ENCODE measurements at regions of chrX and their contacts with region 1.

Region 1: GRCh38 chrX:10636337-10636736 is 16.0 kb upstream of the MID1 start:
- DNase-seq: peak in 1 of 2 experiments; percentile 51
- H3K4me3 ChIP-seq: no peak overlapping the region
- H3K4me3 Mint-ChIP-seq: no peak overlapping the region
- H3K27ac Mint-ChIP-seq: no peak overlapping the region
- H3K4me1 ChIP-seq: peaks cover 8% of the 10 kb centered on the region
- H3K4me1 Mint-ChIP-seq: no peaks in the 10 kb centered on the region
- H3K27me3 ChIP-seq: no peaks in the 10 kb centered on the region
- H3K27me3 Mint-ChIP-seq: no peaks in the 10 kb centered on the region
- CTCF ChIP-seq: peak; percentile 39 to 59

Region 2: DNA sequence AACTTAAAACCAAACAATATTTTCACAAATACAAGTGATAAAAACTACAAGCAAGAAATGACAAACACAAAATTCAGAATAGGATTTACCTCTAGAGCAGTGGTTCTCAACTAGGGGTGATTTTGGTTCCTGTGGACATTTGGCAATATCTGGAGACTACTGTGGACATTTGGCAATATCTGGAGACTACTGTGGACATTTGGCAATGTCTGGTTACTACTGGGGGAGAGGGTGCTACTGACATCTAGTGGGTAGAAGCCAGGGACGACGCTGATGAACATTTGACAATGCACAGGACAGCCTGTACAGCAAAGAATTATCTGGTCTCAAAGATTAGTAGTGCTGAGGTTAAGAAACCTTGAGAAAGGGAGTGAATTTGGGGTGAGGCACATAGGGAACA is 309.8 kb before region 1 on chrX:
- CTCF ChIA-PET with region 1: no interaction called
- POLR2A ChIA-PET with region 1: no interaction called
- intact Hi-C with region 1: loop called (anchors 1 kb)
- DNase-seq: peak; percentile 50 to 54
- H3K4me3 ChIP-seq: no peak overlapping the region
- H3K4me3 Mint-ChIP-seq: no peak overlapping the region
- H3K27ac Mint-ChIP-seq: no peak overlapping the region
- H3K4me1 ChIP-seq: peaks cover 17% of the 10 kb centered on the region
- H3K4me1 Mint-ChIP-seq: no peaks in the 10 kb centered on the region
- H3K27me3 ChIP-seq: no peaks in the 10 kb centered on the region
- H3K27me3 Mint-ChIP-seq: no peaks in the 10 kb centered on the region
- CTCF ChIP-seq: peak; percentile 26 to 48

Region 3: DNA sequence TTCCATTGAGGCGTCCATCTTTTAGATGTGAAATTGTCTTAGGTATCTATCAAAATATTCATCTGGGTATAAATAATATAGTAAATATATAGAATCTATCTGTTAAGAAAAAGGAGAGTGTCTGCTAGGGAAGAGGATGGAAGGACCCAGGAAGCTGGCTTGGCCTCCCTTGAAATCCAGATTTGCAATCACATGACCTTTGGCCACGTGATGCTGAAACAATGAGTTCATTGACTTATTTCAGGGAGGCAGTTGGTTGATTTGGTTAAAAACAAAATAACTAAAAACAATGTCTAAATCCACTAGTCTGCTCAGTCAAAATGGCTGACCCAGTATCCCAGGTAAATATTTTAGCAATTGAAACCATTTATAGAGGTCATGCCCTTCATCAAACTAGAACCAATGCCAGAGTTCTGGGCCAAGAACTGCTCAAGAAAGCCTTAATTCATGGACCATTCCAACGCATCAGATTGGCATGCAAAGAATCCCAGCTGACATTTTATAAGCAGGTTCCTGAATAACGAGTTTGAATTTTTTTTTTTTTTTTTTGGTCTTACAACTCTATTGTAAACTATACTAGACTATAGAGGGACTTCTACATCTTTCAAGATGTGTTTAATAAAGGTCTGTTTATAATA is 188.6 kb before region 1 on chrX:
- CTCF ChIA-PET with region 1: no interaction called
- POLR2A ChIA-PET with region 1: no interaction called
- intact Hi-C with region 1: loop called (anchors 2 kb)
- DNase-seq: no peak
- H3K4me3 ChIP-seq: no peak overlapping the region
- H3K4me3 Mint-ChIP-seq: no peak overlapping the region
- H3K27ac Mint-ChIP-seq: no peak overlapping the region
- H3K4me1 ChIP-seq: no peaks in the 10 kb centered on the region
- H3K4me1 Mint-ChIP-seq: no peaks in the 10 kb centered on the region
- H3K27me3 ChIP-seq: no peaks in the 10 kb centered on the region
- H3K27me3 Mint-ChIP-seq: no peaks in the 10 kb centered on the region
- CTCF ChIP-seq: no peak

Region 4: GRCh38 chrX:10615931-10616775 is 20.2 kb before region 1 on chrX:
- CTCF ChIA-PET with region 1: no interaction called
- POLR2A ChIA-PET with region 1: no interaction called
- intact Hi-C with region 1: loop called (anchors 2 kb)
- DNase-seq: peak; percentile 42 to 49
- H3K4me3 ChIP-seq: no peak overlapping the region
- H3K4me3 Mint-ChIP-seq: peak overlapping the region; percentile 68
- H3K27ac Mint-ChIP-seq: peak overlapping the region; percentile 76
- H3K4me1 ChIP-seq: peaks cover 50% of the 10 kb centered on the region
- H3K4me1 Mint-ChIP-seq: peaks cover 11% of the 10 kb centered on the region
- H3K27me3 ChIP-seq: no peaks in the 10 kb centered on the region
- H3K27me3 Mint-ChIP-seq: no peaks in the 10 kb centered on the region
- CTCF ChIP-seq: peak; percentile 39 to 67